Activated CD8-positive, alpha-beta T cell treated with anti-CD3 and anti-CD28 coated beads for 36 hours (primary cell): ENCODE measurements at regions of chr4 and their contacts with region 1.

Region 1: DNA sequence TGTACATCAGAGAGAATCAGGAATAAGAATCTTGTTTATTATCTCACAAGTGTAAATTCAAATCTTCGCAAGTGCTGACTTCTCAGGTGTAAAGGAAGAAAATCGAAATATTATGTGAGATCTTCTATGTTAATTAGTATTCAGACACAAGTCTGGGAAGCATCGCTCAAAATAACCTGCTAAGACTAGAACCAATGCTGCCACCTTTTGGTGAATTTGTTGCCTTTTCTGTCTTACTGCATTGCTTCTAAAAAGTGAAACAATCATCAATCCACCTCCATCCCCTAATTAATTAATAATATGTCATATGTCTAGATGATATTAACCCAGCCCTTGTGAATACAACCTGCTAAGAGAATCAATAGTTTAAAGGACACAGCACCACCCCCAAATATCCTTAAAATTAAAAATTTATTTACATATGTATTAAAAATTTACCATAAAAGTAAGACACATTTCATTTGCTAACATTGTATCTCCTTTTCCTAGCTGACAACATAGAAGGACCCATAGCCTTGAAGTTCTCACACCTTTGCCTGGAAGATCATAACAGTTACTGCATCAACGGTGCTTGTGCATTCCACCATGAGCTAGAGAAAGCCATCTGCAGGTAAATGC is 3.5 kb downstream of the EPGN start:
- DNase-seq: peak; percentile 32
- ATAC-seq: no peak
- H3K4me3 Mint-ChIP-seq: no peak overlapping the region
- H3K27ac Mint-ChIP-seq: no peak overlapping the region
- H3K4me1 Mint-ChIP-seq: peaks cover 6% of the 10 kb centered on the region
- H3K27me3 Mint-ChIP-seq: no peaks in the 10 kb centered on the region
- CTCF ChIP-seq: peak; percentile 64

Region 2: DNA sequence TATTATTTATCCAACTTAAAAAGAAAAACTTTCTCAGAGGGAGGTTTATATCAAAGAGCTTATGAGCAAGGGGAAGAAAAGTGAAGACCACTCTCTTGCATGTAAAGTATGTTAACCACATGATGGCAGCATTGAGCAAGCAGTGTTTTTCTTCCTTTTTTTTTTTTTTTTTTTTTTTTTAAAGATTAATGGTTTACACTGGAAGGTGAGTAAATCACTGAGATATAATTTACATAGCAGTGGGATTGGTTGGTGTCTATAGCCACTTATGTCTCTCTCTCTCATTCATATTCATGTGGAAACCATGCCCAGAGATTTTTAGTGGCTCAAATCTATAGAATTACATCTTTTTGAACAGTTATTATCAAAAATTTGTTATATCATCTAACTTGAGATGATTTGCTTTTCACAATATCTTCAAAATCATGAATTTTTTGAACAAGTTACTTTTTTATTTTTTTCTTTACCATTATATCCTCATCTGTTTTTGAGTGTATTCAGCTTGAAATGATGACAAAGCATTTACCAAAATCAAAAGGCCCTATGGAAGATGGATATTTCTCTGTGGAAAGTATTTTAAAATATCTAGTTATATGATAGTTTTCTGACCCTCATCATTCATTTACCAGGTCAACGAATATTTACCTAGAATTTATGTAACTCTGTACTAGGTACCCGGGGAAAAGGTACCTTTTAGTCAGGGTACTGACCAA is 122.3 kb before region 1 on chr4:
- CTCF ChIA-PET with region 1: interaction called, 5 read pairs
- POLR2A ChIA-PET with region 1: no interaction called
- intact Hi-C with region 1: loop called (anchors 5 kb)
- DNase-seq: no peak
- ATAC-seq: peak; percentile 42
- H3K4me3 Mint-ChIP-seq: no peak overlapping the region
- H3K27ac Mint-ChIP-seq: no peak overlapping the region
- H3K4me1 Mint-ChIP-seq: no peaks in the 10 kb centered on the region
- H3K27me3 Mint-ChIP-seq: no peaks in the 10 kb centered on the region
- CTCF ChIP-seq: peak; percentile 73

Region 3: GRCh38 chr4:74570095-74570494 is 258.3 kb after region 1 on chr4:
- CTCF ChIA-PET with region 1: no interaction called
- POLR2A ChIA-PET with region 1: no interaction called
- intact Hi-C with region 1: no loop called
- DNase-seq: no peak
- ATAC-seq: no peak
- H3K4me3 Mint-ChIP-seq: no peak overlapping the region
- H3K27ac Mint-ChIP-seq: no peak overlapping the region
- H3K4me1 Mint-ChIP-seq: no peaks in the 10 kb centered on the region
- H3K27me3 Mint-ChIP-seq: no peaks in the 10 kb centered on the region
- CTCF ChIP-seq: no peak